Cardiac septum (tissue), 1 donor: ENCODE measurements at regions of chr9 and their contacts with region 1.

Region 1: GRCh38 chr9:129761901-129762364 is 9.1 kb upstream of the PTGES start:
- DNase-seq: no peak

Region 2: DNA sequence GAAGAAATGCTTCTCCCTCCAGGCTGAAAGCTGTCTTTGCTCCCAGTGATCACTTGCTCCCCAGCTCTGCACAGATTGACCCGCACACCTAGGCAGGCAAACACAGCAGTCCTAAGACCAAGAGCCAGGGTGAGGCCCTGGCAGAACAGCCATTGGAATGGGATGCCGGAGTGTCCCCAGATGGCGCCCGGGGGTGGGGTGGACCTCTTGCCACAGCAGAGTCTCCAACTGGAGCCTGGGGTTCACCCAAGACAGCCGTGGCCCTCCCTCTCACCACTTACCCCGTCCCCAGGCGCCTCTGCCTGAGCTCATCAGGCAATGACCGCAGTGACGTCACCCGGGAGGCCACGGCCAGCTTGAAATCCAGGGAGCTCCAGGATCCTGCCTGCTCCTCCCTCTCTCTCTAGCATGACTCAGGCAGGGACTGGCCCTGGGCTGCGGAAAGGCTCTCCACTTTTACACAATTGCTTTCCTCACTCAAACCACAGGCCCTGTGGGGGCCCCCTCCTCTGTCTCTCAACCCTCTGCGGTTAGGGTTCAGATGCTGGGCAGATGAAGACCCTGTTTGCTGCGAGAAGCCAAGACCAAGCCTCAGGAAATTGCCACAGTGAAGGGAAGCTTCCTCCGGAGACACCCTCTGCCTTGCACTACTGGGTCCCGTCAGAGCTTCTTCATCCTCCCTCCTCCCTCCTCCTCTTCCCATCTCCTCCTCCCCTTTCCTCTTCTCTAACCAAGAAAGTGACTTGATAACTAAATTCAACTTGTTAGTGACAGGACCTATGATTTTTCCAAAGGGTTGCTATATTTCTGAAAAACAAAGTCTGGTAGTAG is 15.2 kb after region 1 on chr9:
- intact Hi-C with region 1: loop called (anchors 2 kb)
- DNase-seq: peak; percentile 95

Region 3: GRCh38 chr9:129838707-129839259 is 76.8 kb after region 1 on chr9:
- intact Hi-C with region 1: no loop called
- DNase-seq: no peak